PC-3 (cell line): ENCODE measurements at regions of chr5 and their contacts with region 1.

Region 1: GRCh38 chr5:75336625-75337339 is at the start of gene HMGCR:
- DNase-seq: peak; percentile 97
- ATAC-seq: peak; percentile 95
- H3K4me3 ChIP-seq: peak within 1 kb of the TSS; percentile 99
- H3K27ac ChIP-seq: peak within 1 kb of the TSS; percentile 86
- H3K4me1 ChIP-seq: peaks cover 33% of the 10 kb centered on the region
- H3K27me3 ChIP-seq: no peaks in the 10 kb centered on the region
- CTCF ChIP-seq: 0 out of 2 replicates have a peak, but pooled peaks have one; percentile 19
- total RNA-seq, gene HMGCR: 19.9 and 22.0 TPM in 2 replicates

Region 2: GRCh38 chr5:74717596-74717995 is 619.2 kb before region 1 on chr5:
- CTCF ChIA-PET with region 1: interaction called, 10 read pairs
- POLR2A ChIA-PET with region 1: no interaction called
- intact Hi-C with region 1: no loop called
- DNase-seq: no peak
- ATAC-seq: no peak
- H3K4me3 ChIP-seq: no peak overlapping the region
- H3K27ac ChIP-seq: no peak overlapping the region
- H3K4me1 ChIP-seq: no peaks in the 10 kb centered on the region
- H3K27me3 ChIP-seq: no peaks in the 10 kb centered on the region
- CTCF ChIP-seq: no peak

Region 3: DNA sequence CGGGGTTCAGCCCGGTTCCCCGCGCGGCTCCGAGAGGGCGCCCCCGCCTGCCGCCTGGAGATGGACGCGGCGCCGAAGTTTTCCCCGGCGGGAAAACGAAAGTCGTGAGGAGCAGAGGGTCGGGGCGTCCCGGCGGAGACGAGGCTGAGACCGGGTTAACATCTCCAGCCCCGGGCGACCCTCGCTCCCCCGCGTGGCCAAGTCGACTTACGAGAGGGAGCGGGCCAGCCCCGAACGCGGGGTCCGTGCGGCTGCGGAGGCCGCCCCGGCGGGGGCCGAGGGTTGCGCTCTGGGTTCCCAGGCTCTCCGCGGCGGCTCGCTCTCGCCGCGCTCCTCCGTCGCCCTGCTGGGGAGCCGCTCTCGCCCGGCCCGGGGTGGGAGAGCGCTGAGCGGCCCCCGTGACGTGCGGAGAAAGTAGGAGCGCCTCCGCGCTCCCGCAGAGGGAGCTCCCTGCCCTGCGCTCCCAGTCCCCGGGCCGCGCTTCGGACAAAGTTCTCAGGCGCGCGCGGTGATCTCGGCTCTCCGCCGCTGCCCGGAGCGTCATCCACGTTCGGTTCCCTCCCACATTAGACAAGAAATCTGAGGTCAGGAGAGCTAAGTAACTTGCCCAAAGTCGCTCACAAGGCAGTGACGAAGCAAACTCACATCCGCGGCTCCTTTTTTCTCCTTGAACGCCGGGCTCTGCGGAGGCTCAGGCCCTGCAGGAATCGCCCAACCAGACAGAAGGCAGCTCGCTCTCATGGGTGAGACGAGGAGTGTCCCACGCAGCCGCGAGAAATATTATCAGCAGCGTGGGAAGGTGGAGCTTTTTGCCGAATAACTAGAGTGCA is 283.3 kb before region 1 on chr5:
- CTCF ChIA-PET with region 1: no interaction called
- POLR2A ChIA-PET with region 1: no interaction called
- intact Hi-C with region 1: loop called (anchors 5 kb)
- DNase-seq: peak; percentile 55
- ATAC-seq: peak; percentile 46
- H3K4me3 ChIP-seq: peak overlapping the region; percentile 79
- H3K27ac ChIP-seq: no peak overlapping the region
- H3K4me1 ChIP-seq: no peaks in the 10 kb centered on the region
- H3K27me3 ChIP-seq: no peaks in the 10 kb centered on the region
- CTCF ChIP-seq: peak; percentile 13; the same call in 1 of the 2 replicates

Region 4: GRCh38 chr5:75279324-75279723 is 57.5 kb before region 1 on chr5:
- CTCF ChIA-PET with region 1: no interaction called
- POLR2A ChIA-PET with region 1: no interaction called
- intact Hi-C with region 1: loop called (anchors 1 kb)
- DNase-seq: no peak
- ATAC-seq: no peak
- H3K4me3 ChIP-seq: no peak overlapping the region
- H3K27ac ChIP-seq: no peak overlapping the region
- H3K4me1 ChIP-seq: peaks cover 5% of the 10 kb centered on the region; the same call in 1 of the 2 replicates
- H3K27me3 ChIP-seq: no peaks in the 10 kb centered on the region
- CTCF ChIP-seq: no peak

Region 5: DNA sequence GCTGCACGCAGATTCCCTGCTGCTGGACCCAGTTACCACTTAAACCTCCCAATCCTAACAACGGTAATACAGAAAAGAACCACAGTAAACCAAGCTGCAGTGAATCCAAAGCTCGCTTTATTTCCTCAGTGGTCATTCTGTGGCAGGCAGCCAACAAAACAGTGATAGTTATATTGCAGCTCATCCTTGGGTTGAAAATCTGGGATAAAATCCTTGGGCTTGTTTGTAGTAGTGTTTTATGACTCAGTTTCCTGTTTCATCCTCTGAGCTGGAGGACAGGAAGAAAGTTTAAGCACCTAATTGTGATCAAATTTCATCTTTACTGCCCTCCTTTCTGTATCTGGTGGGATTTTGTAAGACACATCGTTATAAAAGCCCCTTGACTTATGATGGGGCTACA is 31.6 kb after region 1 on chr5:
- CTCF ChIA-PET with region 1: no interaction called
- POLR2A ChIA-PET with region 1: interaction called, 14 read pairs
- intact Hi-C with region 1: no loop called
- DNase-seq: peak; percentile 22
- ATAC-seq: no peak
- H3K4me3 ChIP-seq: no peak overlapping the region
- H3K27ac ChIP-seq: no peak overlapping the region
- H3K4me1 ChIP-seq: 0 out of 2 replicates have a peak, but pooled peaks cover 6% of the 10 kb centered on the region
- H3K27me3 ChIP-seq: no peaks in the 10 kb centered on the region
- CTCF ChIP-seq: no peak

Region 6: GRCh38 chr5:75681125-75681830 is 344.5 kb after region 1 on chr5:
- CTCF ChIA-PET with region 1: no interaction called
- POLR2A ChIA-PET with region 1: no interaction called
- intact Hi-C with region 1: loop called (anchors 2 kb)
- DNase-seq: peak; percentile 57
- ATAC-seq: no peak
- H3K4me3 ChIP-seq: no peak overlapping the region
- H3K27ac ChIP-seq: no peak overlapping the region
- H3K4me1 ChIP-seq: peaks cover 6% of the 10 kb centered on the region
- H3K27me3 ChIP-seq: no peaks in the 10 kb centered on the region
- CTCF ChIP-seq: peak; percentile 66